ENCODE measurements at regions of chr19 and their contacts with region 1.

Region 1: GRCh38 chr19:4976401-4977298 is 7.7 kb downstream of the KDM4B start:
- DNase-seq: no peak
- ATAC-seq: no peak
- H3K4me3 ChIP-seq: no peak overlapping the region
- H3K27ac ChIP-seq: no peak overlapping the region
- H3K4me1 ChIP-seq: peaks cover 40 to 60% of the 10 kb centered on the region in 2 experiments
- H3K27me3 ChIP-seq: no peaks in the 10 kb centered on the region
- CTCF ChIP-seq: peak in 2 of 3 experiments; percentile 35 to 54; a peak in 4 of 6 replicates
- POLR2A ChIP-seq: no peak
- RAD21 ChIP-seq: no peak

Region 2: GRCh38 chr19:4723367-4724187 is 253.1 kb before region 1 on chr19 and contains the start of gene DPP9:
- CTCF ChIA-PET with region 1: no interaction called
- POLR2A ChIA-PET with region 1: no interaction called
- RAD21 ChIA-PET with region 1: no interaction called
- intact Hi-C with region 1: loop called (anchors 10 kb)
- DNase-seq: peak; percentile 98
- ATAC-seq: peak; percentile 84
- H3K4me3 ChIP-seq: peak within 1 kb of the TSS; percentile 90 to 100
- H3K27ac ChIP-seq: peak within 1 kb of the TSS; percentile 85
- H3K4me1 ChIP-seq: peaks cover 25 to 42% of the 10 kb centered on the region in 2 experiments
- H3K27me3 ChIP-seq: no peaks in the 10 kb centered on the region
- CTCF ChIP-seq: no peak
- POLR2A ChIP-seq: no peak
- RAD21 ChIP-seq: no peak; the same call in none of the 2 replicates
- total RNA-seq, gene DPP9: 67.6 TPM

Region 3: GRCh38 chr19:4933528-4933927 is 43.1 kb before region 1 on chr19:
- CTCF ChIA-PET with region 1: no interaction called
- POLR2A ChIA-PET with region 1: no interaction called
- RAD21 ChIA-PET with region 1: no interaction called
- intact Hi-C with region 1: no loop called
- DNase-seq: no peak
- ATAC-seq: no peak
- H3K4me3 ChIP-seq: no peak overlapping the region
- H3K27ac ChIP-seq: no peak overlapping the region
- H3K4me1 ChIP-seq: peaks cover 0 to 1% of the 10 kb centered on the region in 2 experiments; a peak in 1 of 4 replicates
- H3K27me3 ChIP-seq: no peaks in the 10 kb centered on the region
- CTCF ChIP-seq: no peak
- POLR2A ChIP-seq: no peak
- RAD21 ChIP-seq: no peak

Region 4: DNA sequence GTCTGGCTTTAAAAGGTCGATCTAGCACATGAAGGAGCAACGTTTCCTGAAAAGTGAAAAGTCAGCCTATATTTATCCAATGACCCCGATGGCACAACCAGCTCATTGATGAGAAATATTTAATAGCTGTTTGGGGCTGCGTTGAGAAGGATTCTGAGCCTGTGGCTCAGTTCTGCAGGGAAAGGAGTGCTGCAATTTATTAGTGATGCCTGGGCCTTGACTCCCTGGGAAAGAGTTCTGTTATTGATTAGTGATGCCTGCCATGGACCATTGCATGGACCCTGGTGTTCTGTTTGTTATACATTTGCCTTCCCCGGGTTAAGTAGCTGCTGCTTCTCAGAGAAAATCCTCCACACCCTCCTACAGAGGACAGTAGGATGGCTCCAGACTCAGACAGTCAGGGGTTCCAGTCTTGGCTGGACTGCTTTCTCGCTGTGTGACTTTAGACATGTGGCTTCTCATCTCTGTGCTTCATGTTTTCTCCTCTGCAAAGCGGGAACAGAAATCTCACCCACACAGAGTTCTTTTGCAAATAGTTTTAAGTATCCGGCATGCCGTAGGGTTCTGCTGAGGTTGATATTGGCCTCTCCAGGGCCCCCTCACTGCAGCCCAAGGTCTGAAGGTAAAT is 381.6 kb after region 1 on chr19:
- CTCF ChIA-PET with region 1: no interaction called
- POLR2A ChIA-PET with region 1: interaction called, 11 read pairs
- RAD21 ChIA-PET with region 1: no interaction called
- intact Hi-C with region 1: no loop called
- DNase-seq: peak; percentile 50
- ATAC-seq: peak; percentile 54
- H3K4me3 ChIP-seq: peak overlapping the region in 1 of 2 experiments; percentile 23; a peak in 2 of 4 replicates
- H3K27ac ChIP-seq: no peak overlapping the region
- H3K4me1 ChIP-seq: peaks cover 0 to 17% of the 10 kb centered on the region in 2 experiments; a peak in 2 of 4 replicates
- H3K27me3 ChIP-seq: no peaks in the 10 kb centered on the region
- CTCF ChIP-seq: no peak
- POLR2A ChIP-seq: no peak
- RAD21 ChIP-seq: no peak